Activated T-helper 1 cell treated with anti-CD3 and anti-CD28 coated beads, Interleukin-12 subunit alpha, Interleukin-12 subunit beta, Interleukin-2, Interleukin-4 antibody, amounts not matched to agents 30 ng/mL and 10 ng/mL and 1 ng/mL, durations not matched to agents 14 hours and 24 hours and 36 hours (primary cell): ENCODE measurements at regions of chr21 and their contacts with region 1.

Region 1: DNA sequence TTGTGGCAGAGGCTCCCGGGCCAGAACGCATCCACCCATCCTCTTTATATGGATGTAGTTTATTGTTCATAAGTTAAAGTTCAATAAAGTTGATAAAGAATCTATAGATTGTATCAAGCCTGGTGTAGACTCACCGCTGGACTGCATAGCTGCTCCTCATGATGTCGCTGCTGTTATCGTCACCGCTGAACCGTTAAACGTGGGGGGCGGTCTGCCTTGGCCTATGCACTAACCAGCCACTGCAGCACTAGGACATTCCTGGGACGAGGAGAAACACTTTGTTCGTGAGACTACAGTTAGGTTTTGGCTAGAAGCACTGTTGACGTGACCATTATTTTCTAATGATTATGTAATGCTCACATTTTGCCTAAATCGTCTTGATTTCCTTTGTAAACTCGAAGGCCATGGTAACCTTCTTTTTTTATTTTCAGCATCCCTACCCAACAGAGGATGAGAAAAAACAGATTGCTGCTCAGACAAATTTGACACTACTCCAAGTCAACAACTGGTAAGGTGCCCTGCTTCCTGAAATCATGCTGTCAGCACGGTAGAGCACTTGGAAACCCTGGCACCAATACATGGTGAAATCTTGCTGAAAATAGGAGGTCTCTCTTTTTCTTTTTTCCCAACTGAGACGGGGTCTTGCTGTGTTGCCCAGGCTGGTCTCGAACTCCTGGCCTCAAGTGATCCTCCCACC is 50.2 kb downstream of the PKNOX1 start:
- DNase-seq: no peak
- H3K4me3 Mint-ChIP-seq: no peak overlapping the region
- H3K27ac Mint-ChIP-seq: no peak overlapping the region
- H3K4me1 Mint-ChIP-seq: no peaks in the 10 kb centered on the region
- H3K27me3 Mint-ChIP-seq: no peaks in the 10 kb centered on the region

Region 2: DNA sequence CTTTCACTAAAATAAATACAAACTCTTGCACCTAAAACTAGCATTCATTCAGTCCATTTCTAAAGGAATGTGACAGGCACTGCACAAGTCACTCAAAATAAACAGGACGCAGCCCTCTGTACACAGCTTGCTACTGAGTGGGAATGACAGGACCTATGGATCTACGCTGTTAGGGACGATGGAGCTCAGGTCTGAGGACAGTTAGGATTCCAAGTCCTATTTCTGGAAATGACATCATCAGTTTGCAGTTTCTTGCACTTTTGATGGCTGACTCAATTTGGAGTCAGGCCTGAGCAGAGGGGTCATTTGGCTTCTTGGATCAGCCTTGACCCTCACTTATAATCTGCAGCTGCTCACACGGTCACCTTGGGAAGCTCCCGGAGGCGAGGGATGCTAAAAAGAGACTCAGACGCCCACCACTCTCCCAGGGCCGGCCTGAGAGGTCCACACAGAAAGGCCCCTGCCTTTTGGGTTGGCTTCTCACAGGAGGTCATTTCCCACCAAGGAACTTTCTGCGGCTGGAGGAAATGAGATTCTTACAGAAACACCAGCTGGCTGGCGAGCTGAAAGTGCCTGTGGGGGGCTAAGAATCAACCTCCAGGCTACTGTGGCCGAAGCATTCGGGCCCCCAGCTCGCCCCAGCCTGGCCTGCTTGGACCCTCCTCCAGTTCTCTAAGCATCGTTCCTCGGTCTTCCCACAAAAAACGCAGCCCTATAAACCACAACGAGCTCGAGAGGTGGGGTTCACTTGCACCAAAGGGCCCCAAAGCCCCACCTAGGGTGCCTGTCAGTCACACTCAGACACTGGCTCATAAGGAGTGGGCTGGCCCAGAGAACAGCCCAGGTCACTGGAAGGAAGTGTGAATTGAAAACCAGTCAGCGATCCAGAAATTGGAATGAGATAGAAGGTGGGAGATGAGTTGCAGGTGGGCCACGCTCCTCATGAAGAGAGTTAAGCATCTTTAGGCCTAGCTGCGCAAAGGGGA is 380.1 kb before region 1 on chr21:
- intact Hi-C with region 1: no loop called
- DNase-seq: no peak
- H3K4me3 Mint-ChIP-seq: no peak overlapping the region
- H3K27ac Mint-ChIP-seq: no peak overlapping the region
- H3K4me1 Mint-ChIP-seq: no peaks in the 10 kb centered on the region
- H3K27me3 Mint-ChIP-seq: peaks cover 24% of the 10 kb centered on the region

Region 3: DNA sequence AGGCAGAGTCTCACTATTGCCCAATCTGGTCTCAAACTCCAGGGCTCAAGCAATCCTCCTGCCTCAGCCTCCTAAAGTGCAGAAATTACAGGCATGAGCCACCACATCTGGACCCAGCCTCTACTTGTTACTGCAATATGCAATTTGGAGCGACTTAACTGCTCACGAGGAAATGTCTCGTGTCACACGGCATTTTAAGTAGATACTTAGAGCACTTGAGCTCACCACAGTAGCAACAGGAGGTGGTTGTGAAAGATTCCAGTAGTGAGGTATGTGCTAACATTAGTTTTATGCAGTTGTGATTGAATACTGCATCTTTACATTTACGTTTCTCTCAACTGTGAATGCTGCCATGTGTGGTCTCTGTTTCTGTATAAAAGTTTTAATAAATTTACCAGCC is 137.3 kb before region 1 on chr21:
- intact Hi-C with region 1: no loop called
- DNase-seq: no peak
- H3K4me3 Mint-ChIP-seq: no peak overlapping the region
- H3K27ac Mint-ChIP-seq: no peak overlapping the region
- H3K4me1 Mint-ChIP-seq: peaks cover 2% of the 10 kb centered on the region
- H3K27me3 Mint-ChIP-seq: no peaks in the 10 kb centered on the region

Region 4: DNA sequence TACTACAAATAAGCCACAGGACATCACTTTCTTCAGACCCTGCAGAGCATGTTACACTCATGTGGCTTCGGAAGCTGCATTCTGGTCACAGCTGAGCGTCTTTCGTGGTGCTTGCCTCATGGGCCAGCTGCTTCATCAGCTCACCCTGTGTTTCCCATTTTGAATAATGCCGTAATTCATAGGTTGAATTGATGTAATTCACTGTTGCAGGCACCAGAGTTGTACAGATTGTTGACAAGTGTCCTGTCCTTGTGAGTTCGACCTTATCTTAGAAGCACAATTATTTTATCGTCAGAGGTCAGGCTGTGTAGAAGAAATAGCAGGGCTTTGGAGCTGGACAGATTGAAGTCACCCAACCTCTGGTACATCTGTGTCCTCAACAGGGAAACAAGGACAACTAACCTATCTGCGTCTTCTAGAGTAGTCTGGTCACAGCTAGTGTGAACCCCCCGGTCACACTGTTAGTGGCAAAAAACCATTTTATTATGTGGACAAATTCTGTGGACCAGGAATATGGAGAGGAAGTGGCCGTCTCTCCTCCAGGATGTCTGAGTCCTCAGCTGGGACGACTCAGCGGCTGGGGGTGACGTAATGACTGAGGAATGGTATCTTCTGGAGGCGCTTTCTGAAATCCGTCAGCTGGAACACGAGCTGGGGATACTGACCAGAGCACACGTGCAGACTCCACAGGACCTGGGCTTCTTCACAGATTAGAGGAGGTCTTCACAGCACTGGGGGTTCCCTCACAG is 32.4 kb before region 1 on chr21:
- intact Hi-C with region 1: no loop called
- DNase-seq: no peak
- H3K4me3 Mint-ChIP-seq: no peak overlapping the region
- H3K27ac Mint-ChIP-seq: no peak overlapping the region
- H3K4me1 Mint-ChIP-seq: peaks cover 6% of the 10 kb centered on the region
- H3K27me3 Mint-ChIP-seq: no peaks in the 10 kb centered on the region

Region 5: DNA sequence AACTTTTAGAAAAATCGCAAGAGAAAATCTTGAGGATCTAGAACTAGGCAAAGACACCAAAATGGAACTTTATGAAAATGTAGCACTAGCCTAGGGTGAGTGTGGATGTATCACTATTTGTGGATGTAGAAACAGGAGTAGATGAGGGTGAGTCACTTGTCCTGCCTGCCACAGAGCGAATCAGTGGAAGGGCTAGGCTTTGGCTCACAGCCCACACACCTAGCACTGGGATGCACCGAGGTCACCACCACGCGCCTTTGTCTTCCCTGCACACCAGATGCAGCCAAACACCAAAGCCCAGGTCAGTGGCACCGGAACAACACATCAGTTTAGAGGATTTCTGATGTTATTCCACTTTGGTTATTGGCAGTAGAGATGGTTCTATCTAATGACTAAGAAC is 12.0 kb before region 1 on chr21:
- intact Hi-C with region 1: loop called (anchors 1 kb)
- DNase-seq: no peak
- H3K4me3 Mint-ChIP-seq: no peak overlapping the region
- H3K27ac Mint-ChIP-seq: no peak overlapping the region
- H3K4me1 Mint-ChIP-seq: peaks cover 8% of the 10 kb centered on the region
- H3K27me3 Mint-ChIP-seq: no peaks in the 10 kb centered on the region